Heart left ventricle (tissue), 16 donors: ENCODE measurements at regions of chr11 and their contacts with region 1.

Region 1: DNA sequence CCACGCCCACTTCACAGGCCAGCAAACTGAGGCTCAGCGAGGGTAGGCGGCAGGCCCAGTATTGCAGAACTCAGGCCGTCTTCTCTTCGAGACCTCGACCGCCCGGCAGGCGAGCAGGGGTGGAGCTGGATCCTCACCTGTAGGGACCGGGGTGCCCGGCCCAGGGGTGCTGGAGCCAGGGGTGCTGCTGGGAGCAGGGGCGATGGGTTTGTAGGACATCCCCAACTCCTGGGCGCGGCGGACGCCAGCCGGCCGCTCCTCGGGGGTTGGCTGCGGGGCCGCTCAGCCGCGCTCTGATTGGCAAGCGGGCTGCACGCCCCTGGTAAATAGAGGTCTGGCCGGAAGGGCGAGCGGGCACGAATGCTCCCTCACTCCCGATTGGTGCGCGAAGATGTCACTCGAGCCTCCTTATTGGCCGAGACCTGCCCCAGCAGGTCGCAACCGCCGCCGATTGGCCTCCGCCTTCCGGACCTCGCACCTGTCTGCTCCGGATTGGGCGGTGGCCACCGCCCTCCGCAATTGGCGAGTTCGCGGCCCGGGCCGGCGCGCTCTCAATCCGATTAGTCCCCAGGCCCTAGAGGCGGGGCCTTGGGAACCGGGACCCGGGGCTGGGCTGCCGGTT is at the start of gene CDK2AP2:
- DNase-seq: peak; percentile 100
- ATAC-seq: peak; percentile 78 to 87 (median 84)
- H3K4me3 ChIP-seq: peak within 1 kb of the TSS; percentile 61 to 95 (median 77)
- H3K27ac ChIP-seq: peak within 1 kb of the TSS; percentile 96 to 100 (median 98)
- H3K4me1 ChIP-seq: peaks cover 10 to 53% (median 36%) of the 10 kb centered on the region in 12 donors
- H3K27me3 ChIP-seq: peaks cover 0 to 4% (median 0%) of the 10 kb centered on the region in 9 donors
- CTCF ChIP-seq: peak in 1 of 12 donors; percentile 4
- POLR2A ChIP-seq: peak; percentile 55 to 99
- total RNA-seq, gene CDK2AP2: 37.0 to 123 (median 59.3) TPM

Region 2: GRCh38 chr11:67391304-67392132 is 116.5 kb before region 1 on chr11 and contains the start of gene RAD9A:
- intact Hi-C with region 1: loop called in 8 of 10 experiments (anchors 2 to 5 kb)
- DNase-seq: peak; percentile 96 to 99 (median 97)
- ATAC-seq: peak; percentile 65 to 89 (median 86)
- H3K4me3 ChIP-seq: peak within 1 kb of the TSS; percentile 51 to 93 (median 78)
- H3K27ac ChIP-seq: peak within 1 kb of the TSS; percentile 45 to 93 (median 81)
- H3K4me1 ChIP-seq: peaks cover 0 to 35% (median 16%) of the 10 kb centered on the region in 12 donors
- H3K27me3 ChIP-seq: no peaks in the 10 kb centered on the region
- CTCF ChIP-seq: no peak
- POLR2A ChIP-seq: peak in 1 of 2 donors; percentile 79
- total RNA-seq, gene RAD9A: 3.5 to 9.1 (median 5.8) TPM

Region 3: DNA sequence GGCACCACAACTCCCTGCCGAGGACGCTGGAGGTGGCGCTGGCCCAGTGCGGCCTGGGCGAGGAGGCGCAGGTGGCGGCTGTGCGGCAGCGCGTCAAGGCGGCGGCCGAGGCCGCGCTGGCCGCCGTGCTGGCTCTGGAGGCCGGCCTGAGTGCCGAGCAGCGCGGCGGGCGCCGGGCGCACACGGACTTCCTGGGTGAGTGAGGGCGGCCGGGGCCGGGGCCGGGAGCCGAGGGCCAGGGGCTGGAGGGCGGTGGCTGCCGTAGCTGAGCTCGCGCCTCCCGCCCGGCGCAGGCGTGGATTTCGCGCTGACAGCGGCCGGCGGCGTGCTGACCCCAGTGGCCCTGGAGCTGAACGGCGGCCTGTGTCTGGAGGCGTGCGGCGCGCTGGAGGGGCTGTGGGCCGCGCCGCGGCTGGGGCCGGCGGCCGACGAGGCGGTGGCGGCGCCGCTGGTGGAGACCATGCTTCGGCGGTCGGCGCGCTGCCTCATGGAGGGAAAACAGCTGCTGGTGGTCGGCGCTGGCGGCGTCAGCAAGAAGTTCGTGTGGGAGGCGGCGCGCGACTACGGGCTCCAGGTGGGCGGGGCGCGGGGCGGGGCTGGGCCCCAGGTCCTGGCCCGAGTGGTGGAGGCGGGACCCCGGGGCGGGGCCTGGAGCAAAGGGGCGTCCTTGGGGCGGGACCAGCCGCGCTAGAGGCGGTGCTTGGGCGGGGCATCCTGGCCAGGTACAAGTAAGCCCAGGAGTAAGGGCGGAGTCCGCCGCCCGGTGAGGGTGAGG is 87.1 kb before region 1 on chr11:
- intact Hi-C with region 1: loop called in 4 of 10 experiments (anchors 2 to 5 kb)
- DNase-seq: peak; percentile 96 to 99 (median 97)
- ATAC-seq: peak; percentile 91 to 93 (median 92)
- H3K4me3 ChIP-seq: peak overlapping the region; percentile 32 to 89 (median 64)
- H3K27ac ChIP-seq: peak overlapping the region; percentile 79 to 97 (median 92)
- H3K4me1 ChIP-seq: peaks cover 3 to 56% (median 37%) of the 10 kb centered on the region in 12 donors
- H3K27me3 ChIP-seq: peaks cover 0 to 1% (median 0%) of the 10 kb centered on the region in 9 donors
- CTCF ChIP-seq: no peak
- POLR2A ChIP-seq: peak in 1 of 2 donors; percentile 81

Region 4: GRCh38 chr11:67468835-67469811 is 38.9 kb before region 1 on chr11 and contains the start of gene TMEM134:
- intact Hi-C with region 1: loop called in 6 of 10 experiments (anchors 1 to 5 kb)
- DNase-seq: peak; percentile 94 to 98 (median 95)
- ATAC-seq: peak; percentile 93 to 95 (median 94)
- H3K4me3 ChIP-seq: peak within 1 kb of the TSS; percentile 56 to 98 (median 85)
- H3K27ac ChIP-seq: peak within 1 kb of the TSS; percentile 72 to 94 (median 90)
- H3K4me1 ChIP-seq: peaks cover 0 to 40% (median 23%) of the 10 kb centered on the region in 12 donors
- H3K27me3 ChIP-seq: no peaks in the 10 kb centered on the region
- CTCF ChIP-seq: peak; percentile 31 to 66 (median 45)
- POLR2A ChIP-seq: peak in 1 of 2 donors; percentile 80
- total RNA-seq, gene TMEM134: 67.0 to 146 (median 77.2) TPM

Region 5: DNA sequence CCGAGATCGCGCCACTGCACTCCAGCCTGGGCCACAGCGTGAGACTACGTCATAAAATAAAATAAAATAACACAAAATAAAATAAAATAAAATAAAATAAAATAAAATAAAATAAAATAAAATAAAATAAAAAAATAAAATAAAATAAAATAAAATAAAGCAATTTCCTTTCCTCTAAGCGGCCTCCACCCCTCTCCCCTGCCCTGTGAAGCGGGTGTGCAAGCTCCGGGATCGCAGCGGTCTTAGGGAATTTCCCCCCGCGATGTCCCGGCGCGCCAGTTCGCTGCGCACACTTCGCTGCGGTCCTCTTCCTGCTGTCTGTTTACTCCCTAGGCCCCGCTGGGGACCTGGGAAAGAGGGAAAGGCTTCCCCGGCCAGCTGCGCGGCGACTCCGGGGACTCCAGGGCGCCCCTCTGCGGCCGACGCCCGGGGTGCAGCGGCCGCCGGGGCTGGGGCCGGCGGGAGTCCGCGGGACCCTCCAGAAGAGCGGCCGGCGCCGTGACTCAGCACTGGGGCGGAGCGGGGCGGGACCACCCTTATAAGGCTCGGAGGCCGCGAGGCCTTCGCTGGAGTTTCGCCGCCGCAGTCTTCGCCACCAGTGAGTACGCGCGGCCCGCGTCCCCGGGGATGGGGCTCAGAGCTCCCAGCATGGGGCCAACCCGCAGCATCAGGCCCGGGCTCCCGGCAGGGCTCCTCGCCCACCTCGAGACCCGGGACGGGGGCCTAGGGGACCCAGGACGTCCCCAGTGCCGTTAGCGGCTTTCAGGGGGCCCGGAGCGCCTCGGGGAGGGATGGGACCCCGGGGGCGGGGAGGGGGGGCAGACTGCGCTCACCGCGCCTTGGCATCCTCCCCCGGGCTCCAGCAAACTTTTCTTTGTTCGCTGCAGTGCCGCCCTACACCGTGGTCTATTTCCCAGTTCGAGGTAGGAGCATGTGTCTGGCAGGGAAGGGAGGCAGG is 75.6 kb after region 1 on chr11 and contains the start of gene GSTP1:
- intact Hi-C with region 1: loop called in 1 of 10 experiments (anchors 5 kb)
- DNase-seq: peak; percentile 93 to 96 (median 95)
- ATAC-seq: peak; percentile 92 to 97 (median 97)
- H3K4me3 ChIP-seq: peak within 1 kb of the TSS; percentile 49 to 97 (median 81)
- H3K27ac ChIP-seq: peak within 1 kb of the TSS; percentile 93 to 100 (median 99)
- H3K4me1 ChIP-seq: peaks cover 0 to 57% (median 12%) of the 10 kb centered on the region in 12 donors
- H3K27me3 ChIP-seq: no peaks in the 10 kb centered on the region
- CTCF ChIP-seq: peak; percentile 56 to 92 (median 86)
- POLR2A ChIP-seq: peak; percentile 78 to 97
- total RNA-seq, gene GSTP1: 294 to 830 (median 341) TPM